ENCODE measurements at regions of chr2 and their contacts with region 1.

Region 1: DNA sequence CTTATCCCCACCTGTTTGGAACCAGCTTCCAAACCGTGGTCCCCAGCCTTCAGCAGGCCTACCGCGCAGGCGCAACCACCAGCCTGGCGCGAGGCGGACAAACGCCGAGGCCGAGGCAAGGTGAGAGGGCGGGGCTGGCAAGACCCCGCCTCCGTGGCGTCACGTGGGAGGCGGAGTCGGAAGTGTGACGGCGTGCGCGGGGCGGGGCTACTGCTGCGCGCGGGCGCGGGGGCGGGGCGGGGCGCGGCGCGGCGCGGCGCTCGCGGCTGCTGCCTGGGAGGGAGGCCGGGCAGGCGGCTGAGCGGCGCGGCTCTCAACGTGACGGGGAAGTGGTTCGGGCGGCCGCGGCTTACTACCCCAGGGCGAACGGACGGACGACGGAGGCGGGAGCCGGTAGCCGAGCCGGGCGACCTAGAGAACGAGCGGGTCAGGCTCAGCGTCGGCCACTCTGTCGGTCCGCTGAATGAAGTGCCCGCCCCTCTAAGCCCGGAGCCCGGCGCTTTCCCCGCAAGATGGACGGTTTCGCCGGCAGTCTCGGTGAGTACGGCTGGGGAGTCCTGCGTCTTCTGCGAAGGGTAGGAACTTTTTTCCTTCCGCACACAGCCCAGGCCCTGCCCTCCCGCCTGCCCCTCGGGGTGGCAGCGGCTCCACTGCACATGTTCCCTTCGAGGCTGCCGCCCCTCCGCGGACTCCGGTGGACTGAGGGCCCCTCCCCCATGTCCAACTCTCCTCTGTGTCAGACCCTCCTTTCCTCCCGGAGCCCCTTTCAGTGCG is at the start of gene EML4:
- DNase-seq: peak; percentile 96
- ATAC-seq: peak; percentile 89
- H3K4me3 ChIP-seq: peak within 1 kb of the TSS; percentile 77 to 98 (median 88)
- H3K4me3 Mint-ChIP-seq: no peak within 1 kb of the TSS
- H3K27ac ChIP-seq: peak within 1 kb of the TSS; percentile 88 to 91
- H3K27ac Mint-ChIP-seq: no peak within 1 kb of the TSS
- H3K4me1 ChIP-seq: peaks cover 38 to 40% of the 10 kb centered on the region in 2 donors
- H3K4me1 Mint-ChIP-seq: peaks cover 28% of the 10 kb centered on the region
- H3K27me3 ChIP-seq: no peaks in the 10 kb centered on the region
- H3K27me3 Mint-ChIP-seq: no peaks in the 10 kb centered on the region
- CTCF ChIP-seq: no peak
- total RNA-seq, gene EML4: 134 and 138 TPM in 2 replicates

Region 2: GRCh38 chr2:41966431-41966893 is 202.8 kb before region 1 on chr2:
- CTCF ChIA-PET with region 1: no interaction called
- POLR2A ChIA-PET with region 1: no interaction called
- intact Hi-C with region 1: no loop called
- DNase-seq: no peak
- ATAC-seq: no peak
- H3K4me3 ChIP-seq: no peak overlapping the region
- H3K4me3 Mint-ChIP-seq: no peak overlapping the region
- H3K27ac ChIP-seq: no peak overlapping the region
- H3K27ac Mint-ChIP-seq: no peak overlapping the region
- H3K4me1 ChIP-seq: no peaks in the 10 kb centered on the region
- H3K4me1 Mint-ChIP-seq: no peaks in the 10 kb centered on the region
- H3K27me3 ChIP-seq: peaks cover 0 to 3% (median 0%) of the 10 kb centered on the region in 4 experiments
- H3K27me3 Mint-ChIP-seq: peaks cover 21% of the 10 kb centered on the region
- CTCF ChIP-seq: no peak

Region 3: GRCh38 chr2:42117923-42118753 is 51.1 kb before region 1 on chr2:
- CTCF ChIA-PET with region 1: interaction called, 9 read pairs
- POLR2A ChIA-PET with region 1: no interaction called
- intact Hi-C with region 1: loop called (anchors 1 kb)
- DNase-seq: peak; percentile 83
- ATAC-seq: peak; percentile 87
- H3K4me3 ChIP-seq: peak overlapping the region in 3 of 5 experiments; percentile 7 to 16 (median 11)
- H3K4me3 Mint-ChIP-seq: peak overlapping the region; percentile 40
- H3K27ac ChIP-seq: peak overlapping the region; percentile 62 to 75
- H3K27ac Mint-ChIP-seq: peak overlapping the region; percentile 69
- H3K4me1 ChIP-seq: peaks cover 48% of the 10 kb centered on the region in 2 donors
- H3K4me1 Mint-ChIP-seq: peaks cover 61% of the 10 kb centered on the region
- H3K27me3 ChIP-seq: no peaks in the 10 kb centered on the region
- H3K27me3 Mint-ChIP-seq: no peaks in the 10 kb centered on the region
- CTCF ChIP-seq: no peak

Region 4: GRCh38 chr2:42792583-42793333 is 623.5 kb after region 1 on chr2 and contains the start of gene HAAO:
- CTCF ChIA-PET with region 1: no interaction called
- POLR2A ChIA-PET with region 1: no interaction called
- intact Hi-C with region 1: no loop called
- DNase-seq: peak; percentile 74
- ATAC-seq: peak; percentile 61
- H3K4me3 ChIP-seq: peak within 1 kb of the TSS; percentile 47 to 93 (median 76)
- H3K4me3 Mint-ChIP-seq: peak within 1 kb of the TSS; percentile 87
- H3K27ac ChIP-seq: peak within 1 kb of the TSS; percentile 49 to 69
- H3K27ac Mint-ChIP-seq: peak within 1 kb of the TSS; percentile 89
- H3K4me1 ChIP-seq: peaks cover 18 to 37% of the 10 kb centered on the region in 2 donors
- H3K4me1 Mint-ChIP-seq: peaks cover 46% of the 10 kb centered on the region
- H3K27me3 ChIP-seq: no peaks in the 10 kb centered on the region
- H3K27me3 Mint-ChIP-seq: no peaks in the 10 kb centered on the region
- CTCF ChIP-seq: peak; percentile 11
- total RNA-seq, gene HAAO: 17.6 and 21.0 TPM in 2 replicates